Endothelial cell of umbilical vein (primary cell): ENCODE measurements at regions of chr7 and their contacts with region 1.

Region 1: GRCh38 chr7:21253740-21254687 is 173.9 kb upstream of the SP4 start:
- DNase-seq: peak; percentile 78
- H3K4me3 ChIP-seq: no peak overlapping the region
- H3K27ac ChIP-seq: no peak overlapping the region
- H3K4me1 ChIP-seq: no peaks in the 10 kb centered on the region
- H3K27me3 ChIP-seq: peaks cover 28 to 67% of the 10 kb centered on the region in 2 experiments
- CTCF ChIP-seq: peak; percentile 52 to 72
- POLR2A ChIP-seq: no peak

Region 2: GRCh38 chr7:20778063-20778721 is 475.8 kb before region 1 on chr7:
- CTCF ChIA-PET with region 1: interaction called, 223 read pairs
- POLR2A ChIA-PET with region 1: no interaction called
- dilution Hi-C with region 1: no loop called
- intact Hi-C with region 1: loop called (anchors 1 kb)
- DNase-seq: peak; percentile 30
- H3K4me3 ChIP-seq: peak overlapping the region in 2 of 3 experiments; percentile 30 to 46
- H3K27ac ChIP-seq: no peak overlapping the region
- H3K4me1 ChIP-seq: peaks cover 5% of the 10 kb centered on the region
- H3K27me3 ChIP-seq: peaks cover 54 to 86% of the 10 kb centered on the region in 2 experiments
- CTCF ChIP-seq: peak; percentile 72 to 78
- POLR2A ChIP-seq: no peak

Region 3: DNA sequence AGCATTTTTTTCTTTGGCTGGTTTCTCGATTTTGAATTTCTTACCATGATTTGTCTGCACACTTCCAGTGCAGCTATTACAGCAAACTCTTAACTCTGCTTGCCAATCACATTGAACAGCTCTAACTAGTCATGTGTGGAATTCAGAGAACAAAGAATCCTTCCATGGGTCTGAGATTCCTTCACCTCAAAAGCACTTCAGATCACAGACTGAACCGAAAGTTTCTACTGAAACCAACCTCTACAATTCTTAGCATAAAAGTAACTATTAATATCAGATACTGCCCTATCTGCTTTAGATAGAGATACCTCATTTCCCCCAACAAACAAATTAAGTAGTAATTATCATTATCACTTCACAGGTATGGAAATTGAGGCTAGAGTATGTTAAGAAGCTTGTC is 117.3 kb after region 1 on chr7:
- CTCF ChIA-PET with region 1: no interaction called
- POLR2A ChIA-PET with region 1: no interaction called
- dilution Hi-C with region 1: no loop called
- intact Hi-C with region 1: no loop called
- DNase-seq: no peak
- H3K4me3 ChIP-seq: no peak overlapping the region
- H3K27ac ChIP-seq: no peak overlapping the region
- H3K4me1 ChIP-seq: peaks cover 6% of the 10 kb centered on the region
- H3K27me3 ChIP-seq: no peaks in the 10 kb centered on the region
- CTCF ChIP-seq: no peak
- POLR2A ChIP-seq: no peak

Region 4: GRCh38 chr7:21507626-21508343 is 253.8 kb after region 1 on chr7:
- CTCF ChIA-PET with region 1: interaction called, 32 read pairs
- POLR2A ChIA-PET with region 1: no interaction called
- dilution Hi-C with region 1: no loop called
- intact Hi-C with region 1: loop called (anchors 1 kb)
- DNase-seq: peak; percentile 52
- H3K4me3 ChIP-seq: no peak overlapping the region
- H3K27ac ChIP-seq: no peak overlapping the region
- H3K4me1 ChIP-seq: no peaks in the 10 kb centered on the region
- H3K27me3 ChIP-seq: no peaks in the 10 kb centered on the region
- CTCF ChIP-seq: peak; percentile 76
- POLR2A ChIP-seq: no peak

Region 5: DNA sequence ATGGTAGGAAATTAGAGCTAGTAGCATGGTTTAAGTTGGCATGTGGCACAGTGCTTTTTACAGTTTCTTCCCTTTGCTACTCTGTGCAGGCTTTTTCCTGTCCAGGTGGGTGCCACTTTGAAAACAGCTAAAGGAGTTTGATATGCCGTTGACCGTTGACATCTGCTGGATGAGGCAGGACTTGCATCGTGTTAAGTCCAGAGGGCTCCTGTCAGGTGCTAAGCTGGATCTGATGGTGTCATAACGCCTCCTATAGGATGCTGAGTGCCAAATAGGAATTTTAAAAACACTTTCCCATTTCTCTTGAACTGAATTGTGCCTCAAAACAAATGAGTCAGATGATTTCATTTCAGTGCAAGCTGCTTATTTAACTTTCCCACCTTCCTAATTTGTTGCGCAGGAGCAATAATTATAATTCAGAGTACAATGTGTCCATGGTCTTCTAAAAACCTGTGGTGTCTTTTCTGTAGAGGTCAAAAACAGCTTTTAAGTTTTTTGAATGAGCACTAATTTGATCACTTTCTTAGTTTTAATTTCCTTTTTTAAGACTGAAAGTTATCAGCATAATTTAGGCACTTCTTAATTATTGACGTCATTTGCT is 513.4 kb after region 1 on chr7:
- CTCF ChIA-PET with region 1: interaction called, 35 read pairs
- POLR2A ChIA-PET with region 1: no interaction called
- dilution Hi-C with region 1: no loop called
- intact Hi-C with region 1: loop called (anchors 1 kb)
- DNase-seq: peak; percentile 60
- H3K4me3 ChIP-seq: no peak overlapping the region
- H3K27ac ChIP-seq: no peak overlapping the region
- H3K4me1 ChIP-seq: no peaks in the 10 kb centered on the region
- H3K27me3 ChIP-seq: peaks cover 8% of the 10 kb centered on the region in 2 experiments
- CTCF ChIP-seq: peak; percentile 42 to 47
- POLR2A ChIP-seq: no peak